ENCODE measurements at regions of chr10 and their contacts with region 1.

Region 1: DNA sequence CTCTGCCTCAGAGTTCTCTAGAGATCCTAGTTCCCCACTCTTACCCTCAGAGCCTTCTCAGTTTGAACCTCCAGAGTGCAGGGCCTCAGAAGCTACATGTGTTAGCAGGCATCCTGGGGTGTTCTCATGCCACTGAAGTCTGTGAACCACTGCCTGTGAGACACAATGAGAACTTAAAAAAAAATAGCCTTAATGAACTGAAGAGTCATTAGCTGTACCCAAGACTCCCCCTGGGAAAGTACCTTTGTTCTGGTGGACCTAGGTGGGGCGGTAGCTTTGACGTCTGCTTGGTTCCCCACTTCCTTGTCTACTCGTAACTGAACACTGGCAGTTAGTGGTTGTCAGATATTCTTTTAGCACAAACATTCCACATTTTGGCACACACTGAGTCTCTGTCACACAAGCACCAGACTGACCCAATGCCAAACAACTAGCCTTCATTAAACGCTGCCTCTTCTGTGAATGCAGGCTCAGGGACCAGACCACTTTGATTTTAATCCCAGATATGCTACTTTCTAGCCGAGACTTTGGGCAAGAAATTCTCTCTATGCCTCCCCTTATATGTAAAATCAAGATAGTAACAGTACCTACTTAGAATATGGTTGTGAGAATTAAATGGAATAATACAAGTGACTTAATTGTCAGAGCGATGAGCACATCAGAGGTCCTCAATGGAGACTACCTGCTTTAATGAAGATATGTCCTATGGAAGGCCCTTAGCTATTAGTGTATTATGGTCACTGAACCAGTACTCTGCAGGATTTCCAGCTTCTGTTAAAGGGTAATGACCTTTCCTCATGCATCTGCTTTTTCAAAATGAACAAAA is 75.3 kb upstream of the CC2D2B start:
- DNase-seq: peak; percentile 52 to 88
- ATAC-seq: peak; percentile 88 to 95 (median 92)
- H3K4me3 ChIP-seq: no peak overlapping the region
- H3K4me3 Mint-ChIP-seq: peak overlapping the region; percentile 40
- H3K27ac ChIP-seq: peak overlapping the region; percentile 90
- H3K27ac Mint-ChIP-seq: peak overlapping the region; percentile 92 to 94
- H3K4me1 ChIP-seq: peaks cover 36% of the 10 kb centered on the region
- H3K4me1 Mint-ChIP-seq: peaks cover 33 to 40% of the 10 kb centered on the region in 2 donors
- H3K27me3 ChIP-seq: no peaks in the 10 kb centered on the region
- H3K27me3 Mint-ChIP-seq: no peaks in the 10 kb centered on the region
- CTCF ChIP-seq: no peak

Region 2: DNA sequence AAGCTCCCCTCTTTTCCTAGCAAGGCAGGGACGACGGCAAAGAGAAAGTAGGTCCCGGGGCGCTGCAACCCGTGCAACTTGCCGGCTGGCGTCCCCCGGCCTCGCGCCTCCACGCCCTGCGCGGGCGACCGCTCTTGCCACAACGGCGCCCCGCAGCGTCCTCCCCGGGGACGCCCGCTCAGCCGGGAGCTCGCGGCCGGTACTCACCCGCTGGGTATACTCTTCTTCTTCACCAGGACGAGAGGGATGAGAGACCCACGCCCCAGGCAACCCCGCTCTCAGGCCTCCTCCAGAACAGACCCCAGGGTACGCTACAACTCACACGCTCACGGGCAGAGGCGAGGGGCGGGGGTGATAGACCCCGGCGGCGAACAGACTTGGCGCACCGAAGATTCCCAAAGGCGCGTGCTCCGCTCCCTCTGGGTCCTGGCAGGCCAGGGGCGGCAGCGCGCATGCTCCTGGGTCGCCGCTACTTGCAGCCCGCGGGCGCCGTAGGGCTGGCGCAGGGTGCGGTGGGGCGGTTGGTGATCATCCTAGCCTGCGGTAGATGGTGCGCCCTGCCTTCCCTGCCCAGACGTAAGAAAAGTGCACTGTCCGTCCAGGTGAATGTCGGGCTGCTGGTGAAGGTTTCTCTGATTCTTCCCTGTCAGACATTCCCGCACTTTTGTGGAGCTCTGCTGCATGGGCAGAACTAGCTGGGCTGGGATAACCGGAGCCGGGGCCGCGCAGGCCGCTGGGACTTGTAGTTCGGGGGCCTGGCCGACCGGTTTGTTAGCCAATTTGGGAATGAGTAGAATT is 75.2 kb after region 1 on chr10 and contains the start of gene CC2D2B:
- intact Hi-C with region 1: loop called (anchors 2 kb)
- DNase-seq: peak; percentile 38 to 73
- ATAC-seq: peak; percentile 76 to 82 (median 81)
- H3K4me3 ChIP-seq: peak within 1 kb of the TSS; percentile 86
- H3K4me3 Mint-ChIP-seq: peak within 1 kb of the TSS; percentile 94
- H3K27ac ChIP-seq: peak within 1 kb of the TSS; percentile 60
- H3K27ac Mint-ChIP-seq: peak within 1 kb of the TSS; percentile 41 to 78
- H3K4me1 ChIP-seq: peaks cover 3% of the 10 kb centered on the region
- H3K4me1 Mint-ChIP-seq: peaks cover 14 to 15% of the 10 kb centered on the region in 2 donors
- H3K27me3 ChIP-seq: no peaks in the 10 kb centered on the region
- H3K27me3 Mint-ChIP-seq: peaks cover 5 to 11% of the 10 kb centered on the region in 2 donors
- CTCF ChIP-seq: no peak
- total RNA-seq, gene CC2D2B: 0.14 to 0.68 TPM in 2 of 3 donors, not detected in the other

Measured in natural killer cell (primary cell).